ENCODE measurements at regions of chr16 and their contacts with region 1.

Region 1: GRCh38 chr16:75527825-75528299 is 8.0 kb downstream of the CHST5 start:
- DNase-seq: no peak
- H3K4me3 ChIP-seq: no peak overlapping the region
- H3K27ac ChIP-seq: no peak overlapping the region
- H3K4me1 ChIP-seq: no peaks in the 10 kb centered on the region
- H3K27me3 ChIP-seq: no peaks in the 10 kb centered on the region
- CTCF ChIP-seq: no peak

Region 2: DNA sequence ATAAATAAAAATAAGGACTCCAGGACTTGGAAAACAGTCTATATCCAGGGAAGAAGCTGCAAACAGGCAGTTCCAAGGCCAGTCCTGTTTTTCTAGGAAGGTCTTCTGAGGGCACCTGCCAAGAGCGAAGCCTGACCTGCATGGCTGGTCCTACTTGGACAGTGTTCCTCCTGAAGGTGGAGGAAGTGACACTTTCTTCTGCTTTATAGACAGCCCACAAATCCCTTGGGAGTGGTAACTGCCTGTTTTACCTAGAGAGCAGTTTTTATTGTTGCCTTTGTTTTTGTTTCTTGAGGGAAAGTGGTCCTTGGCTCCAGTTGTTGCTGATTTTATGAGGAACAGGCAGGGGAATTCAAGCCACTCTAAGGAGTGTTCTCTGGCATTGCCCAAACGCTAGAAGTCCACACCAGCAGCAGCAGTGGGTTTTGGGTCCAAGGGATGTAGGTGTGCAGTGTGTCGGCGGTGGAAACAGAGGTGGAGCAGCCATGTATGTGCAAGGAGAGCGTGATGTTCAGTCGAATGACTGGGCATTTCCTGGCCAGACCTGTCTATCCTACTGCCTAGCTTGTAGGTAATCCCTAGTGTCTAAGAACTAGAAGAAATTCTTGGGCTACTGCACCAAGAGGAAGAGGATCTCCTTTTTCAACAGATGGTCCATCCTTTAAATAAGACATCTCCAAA is 446.5 kb before region 1 on chr16:
- CTCF ChIA-PET with region 1: no interaction called
- POLR2A ChIA-PET with region 1: interaction called, 14 read pairs
- intact Hi-C with region 1: no loop called
- DNase-seq: no peak
- H3K4me3 ChIP-seq: no peak overlapping the region
- H3K27ac ChIP-seq: no peak overlapping the region
- H3K4me1 ChIP-seq: peaks cover 8% of the 10 kb centered on the region
- H3K27me3 ChIP-seq: no peaks in the 10 kb centered on the region
- CTCF ChIP-seq: no peak